Body of pancreas (tissue), 4 donors: ENCODE measurements at regions of chr2 and their contacts with region 1.

Region 1: GRCh38 chr2:106642679-106643078 is 155.5 kb downstream of the CD8B2 start:
- DNase-seq: peak in 1 of 4 donors; percentile 33
- ATAC-seq: peak; percentile 33
- H3K4me3 ChIP-seq: no peak overlapping the region
- H3K27ac ChIP-seq: no peak overlapping the region
- H3K4me1 ChIP-seq: no peaks in the 10 kb centered on the region
- H3K27me3 ChIP-seq: no peaks in the 10 kb centered on the region
- CTCF ChIP-seq: no peak
- POLR2A ChIP-seq: no peak

Region 2: DNA sequence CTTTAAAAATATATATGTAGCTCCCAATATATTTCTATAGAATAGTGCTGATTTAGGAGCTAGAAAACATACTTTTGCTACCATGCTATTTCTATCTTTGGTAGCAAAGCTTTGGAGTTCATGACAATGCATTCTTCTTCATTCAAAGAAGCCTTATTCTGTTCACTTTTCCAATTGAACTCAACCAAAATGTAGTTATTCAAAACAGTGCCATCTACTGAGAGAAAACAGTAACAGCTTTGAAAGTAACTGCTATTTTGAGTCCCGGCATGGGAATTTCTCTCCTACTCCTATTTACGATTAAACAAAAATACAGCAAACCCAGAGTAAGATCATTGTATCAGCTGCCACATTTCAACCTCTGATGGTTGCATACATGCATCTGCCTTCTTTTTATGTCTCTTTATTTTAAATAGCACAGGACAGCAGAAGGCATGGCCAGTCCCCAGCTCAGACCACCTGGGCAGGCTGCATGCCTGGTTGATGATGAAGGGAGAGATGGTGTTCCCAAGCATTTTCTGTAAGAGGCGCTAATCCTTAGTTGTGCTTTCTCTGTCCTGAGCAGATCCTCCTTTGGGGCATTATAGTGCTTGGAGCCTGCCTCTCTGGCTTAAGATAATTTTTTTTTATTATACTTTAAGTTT is 1527.4 kb after region 1 on chr2:
- intact Hi-C with region 1: loop called (anchors 10 kb)
- DNase-seq: no peak
- ATAC-seq: no peak
- H3K4me3 ChIP-seq: no peak overlapping the region
- H3K27ac ChIP-seq: no peak overlapping the region
- H3K4me1 ChIP-seq: no peaks in the 10 kb centered on the region
- H3K27me3 ChIP-seq: no peaks in the 10 kb centered on the region
- CTCF ChIP-seq: peak in 6 of 7 experiments; percentile 23 to 36 (median 29)
- POLR2A ChIP-seq: no peak